Activated T-helper 2 cell treated with anti-CD3 and anti-CD28 coated beads, Interferon-gamma antibody, Interleukin-2, Interleukin-4, amounts not matched to agents 10 μg/mL and 5 μg/mL and 100 μg/mL, durations not matched to agents 14 hours and 24 hours and 36 hours (primary cell): ENCODE measurements at regions of chr2 and their contacts with region 1.

Region 1: GRCh38 chr2:35410431-35411061 is 945.0 kb upstream of the CRIM1 start:
- DNase-seq: no peak
- H3K4me3 Mint-ChIP-seq: no peak overlapping the region
- H3K27ac Mint-ChIP-seq: no peak overlapping the region
- H3K4me1 Mint-ChIP-seq: no peaks in the 10 kb centered on the region
- H3K27me3 Mint-ChIP-seq: no peaks in the 10 kb centered on the region

Region 2: GRCh38 chr2:34096562-34097171 is 1313.9 kb before region 1 on chr2:
- intact Hi-C with region 1: loop called (anchors 1 kb)
- DNase-seq: no peak
- H3K4me3 Mint-ChIP-seq: no peak overlapping the region
- H3K27ac Mint-ChIP-seq: no peak overlapping the region
- H3K4me1 Mint-ChIP-seq: no peaks in the 10 kb centered on the region
- H3K27me3 Mint-ChIP-seq: no peaks in the 10 kb centered on the region

Region 3: GRCh38 chr2:35783725-35784124 is 373.2 kb after region 1 on chr2:
- intact Hi-C with region 1: no loop called
- DNase-seq: no peak
- H3K4me3 Mint-ChIP-seq: no peak overlapping the region
- H3K27ac Mint-ChIP-seq: no peak overlapping the region
- H3K4me1 Mint-ChIP-seq: no peaks in the 10 kb centered on the region
- H3K27me3 Mint-ChIP-seq: no peaks in the 10 kb centered on the region